ENCODE measurements at regions of chrX and their contacts with region 1.

Region 1: DNA sequence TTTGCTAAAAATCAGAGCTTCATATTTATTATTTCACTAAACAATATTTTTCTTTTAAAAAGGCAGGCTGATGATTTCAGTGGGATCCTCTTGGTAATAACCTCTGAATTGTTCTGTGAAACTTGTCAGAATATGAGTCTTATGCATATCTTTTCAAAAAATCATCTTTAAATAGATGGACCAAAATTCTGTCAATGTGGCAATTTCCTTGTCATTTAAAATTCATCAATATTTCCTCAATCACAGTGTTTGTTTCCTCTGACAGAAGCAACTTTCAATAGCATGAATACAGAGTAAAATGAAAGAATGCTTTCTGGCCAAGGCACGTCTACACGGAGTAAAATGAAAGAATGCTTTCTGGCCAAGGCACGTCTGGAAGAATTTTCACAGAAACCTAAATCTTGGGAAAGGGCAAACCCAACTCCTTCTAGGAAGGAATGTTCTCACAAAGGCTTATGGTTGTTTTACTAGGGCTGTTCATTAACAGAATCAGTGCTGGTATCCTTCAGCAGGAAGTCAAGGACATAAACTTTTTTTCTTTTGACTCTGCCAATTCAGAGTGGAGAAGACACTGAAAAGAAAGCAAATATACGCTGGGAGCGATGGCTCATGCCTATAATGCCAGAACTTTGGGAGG is 99.0 kb upstream of the GPR34 start:
- DNase-seq: no peak
- ATAC-seq: no peak
- H3K4me3 ChIP-seq: no peak overlapping the region
- H3K4me3 Mint-ChIP-seq: no peak overlapping the region
- H3K27ac ChIP-seq: no peak overlapping the region
- H3K27ac Mint-ChIP-seq: no peak overlapping the region
- H3K4me1 ChIP-seq: no peaks in the 10 kb centered on the region
- H3K4me1 Mint-ChIP-seq: no peaks in the 10 kb centered on the region
- H3K27me3 ChIP-seq: no peaks in the 10 kb centered on the region
- H3K27me3 Mint-ChIP-seq: peaks cover 0 to 5% of the 10 kb centered on the region in 2 donors

Region 2: GRCh38 chrX:41677183-41678060 is 87.7 kb after region 1 on chrX:
- CTCF ChIA-PET with region 1: interaction called in 1 of 2 experiments, 10 read pairs
- POLR2A ChIA-PET with region 1: no interaction called
- DNase-seq: no peak
- ATAC-seq: no peak
- H3K4me3 ChIP-seq: no peak overlapping the region
- H3K4me3 Mint-ChIP-seq: no peak overlapping the region
- H3K27ac ChIP-seq: no peak overlapping the region
- H3K27ac Mint-ChIP-seq: no peak overlapping the region
- H3K4me1 ChIP-seq: no peaks in the 10 kb centered on the region
- H3K4me1 Mint-ChIP-seq: peaks cover 0 to 10% (median 0%) of the 10 kb centered on the region in 3 donors
- H3K27me3 ChIP-seq: no peaks in the 10 kb centered on the region
- H3K27me3 Mint-ChIP-seq: peaks cover 0 to 11% of the 10 kb centered on the region in 2 donors

Measured in T-cell (primary cell).